Cardiac septum (tissue), 1 donor: ENCODE measurements at regions of chr6 and their contacts with region 1.

Region 1: DNA sequence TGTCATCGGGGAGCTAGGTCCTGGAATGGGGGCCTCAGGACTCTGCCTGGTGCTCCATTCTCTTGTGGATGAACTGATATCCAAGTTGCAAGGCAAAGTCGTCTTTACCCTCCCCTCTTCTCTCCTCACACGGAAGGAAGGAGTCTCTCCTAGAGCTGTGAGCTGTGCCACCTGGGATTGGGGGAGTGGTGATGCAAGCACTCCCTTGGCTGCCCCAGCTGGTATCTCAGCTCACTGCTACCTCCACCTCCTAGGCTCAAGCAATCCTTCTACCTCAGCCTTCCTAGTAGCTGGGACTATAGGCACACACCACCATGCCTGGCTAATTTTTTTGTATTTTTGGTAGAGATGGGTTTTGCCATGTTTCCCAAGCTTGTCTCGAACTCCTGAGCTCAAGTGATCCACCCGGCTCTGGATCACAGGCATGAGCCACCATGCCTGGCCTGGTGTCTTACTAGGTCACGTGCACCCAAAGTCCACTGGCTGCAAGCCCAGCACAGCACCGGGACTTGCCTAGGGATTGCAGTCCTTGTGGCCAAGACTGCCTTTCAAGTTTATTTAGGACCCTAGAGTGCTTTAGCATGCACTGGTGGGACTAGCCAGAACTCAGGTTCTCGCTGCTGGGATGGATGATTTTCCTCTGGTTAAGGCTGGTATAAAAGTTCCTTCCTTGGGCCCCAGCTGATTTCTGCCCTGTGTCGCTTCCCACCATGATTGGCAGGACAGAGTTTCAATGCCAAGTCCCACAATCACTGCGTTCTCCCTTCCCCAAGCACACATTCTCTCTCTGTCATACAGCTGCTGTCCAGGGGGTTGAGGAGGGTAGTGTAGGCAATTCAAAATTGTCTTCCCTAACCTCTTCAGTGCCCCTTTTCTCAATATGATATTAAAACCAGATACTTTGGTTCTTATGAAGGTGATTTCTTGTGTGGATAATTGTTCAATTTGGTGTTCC is 33.5 kb downstream of the SMAP1 start:
- DNase-seq: no peak

Region 2: DNA sequence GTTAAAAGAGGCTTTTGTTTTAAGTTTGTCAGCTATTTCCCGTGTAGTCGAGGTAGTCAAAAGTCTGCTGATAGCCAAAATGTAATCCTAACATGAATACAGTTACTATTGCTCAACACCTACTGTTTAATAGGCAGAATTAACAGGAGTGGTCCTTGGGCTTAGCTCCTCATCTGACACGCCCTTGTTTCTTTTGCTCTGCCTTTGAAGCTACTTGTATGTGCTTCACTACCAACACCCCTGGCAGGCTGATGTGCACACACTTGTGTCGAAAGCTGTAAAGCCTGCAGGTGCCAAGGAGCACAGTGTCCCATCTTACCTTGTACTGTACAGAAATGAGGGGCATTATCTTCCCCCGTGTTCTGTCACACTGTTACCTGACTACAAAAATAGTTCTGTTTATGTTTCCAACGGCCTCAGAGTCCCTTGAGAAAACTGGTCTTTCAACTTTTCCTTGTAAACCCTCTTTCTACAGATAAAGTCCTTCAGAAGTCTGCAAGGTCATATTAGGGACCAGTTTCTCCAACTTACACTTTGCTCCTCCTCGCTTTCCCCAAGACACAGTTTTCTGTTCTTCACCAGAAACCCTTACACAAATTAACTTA is 125.2 kb before region 1 on chr6:
- intact Hi-C with region 1: no loop called
- DNase-seq: no peak

Region 3: GRCh38 chr6:70586114-70586513 is 115.1 kb before region 1 on chr6:
- intact Hi-C with region 1: no loop called
- DNase-seq: no peak

Region 4: DNA sequence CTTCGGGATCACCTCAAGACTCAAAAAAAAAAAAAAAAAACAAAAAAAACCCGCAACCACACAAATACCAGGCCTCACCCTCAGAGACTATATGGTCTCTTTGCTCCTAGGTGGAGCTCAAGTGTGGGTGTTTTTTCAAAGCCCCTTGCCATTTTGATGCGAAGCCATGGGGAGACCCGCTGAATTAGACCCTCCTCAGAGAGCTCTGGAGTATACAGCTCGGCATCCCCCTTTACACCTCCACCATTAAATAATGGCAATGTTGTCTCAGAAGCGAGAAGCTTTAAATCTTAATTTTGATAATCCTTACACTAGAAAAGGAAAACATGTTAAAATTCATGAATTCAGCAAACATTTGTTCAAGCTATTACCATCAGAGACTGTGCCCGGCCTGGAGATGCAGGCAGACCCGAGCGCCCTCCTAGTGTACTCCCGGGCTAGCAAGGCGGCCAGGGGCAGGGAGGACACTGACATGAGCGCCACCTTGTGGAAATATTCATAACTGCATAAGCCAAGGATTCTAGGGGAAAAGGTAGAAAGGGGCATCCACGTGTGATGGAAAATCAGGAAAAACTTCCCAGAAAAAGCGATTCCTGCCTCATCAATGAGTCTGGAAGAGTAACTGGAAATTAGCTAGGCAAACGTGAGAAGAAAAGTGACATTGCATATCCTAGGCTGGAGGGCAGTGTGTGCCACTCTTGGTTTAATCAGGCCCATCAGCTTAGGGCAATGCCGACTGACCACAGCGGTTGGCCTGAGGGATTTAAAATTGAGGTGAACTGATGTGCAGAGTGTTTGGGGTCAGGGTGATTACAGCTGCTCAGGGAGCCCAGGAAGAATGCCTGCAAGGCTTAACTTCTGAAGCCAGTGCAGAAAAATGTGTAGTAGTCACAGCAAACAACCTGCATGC is 183.1 kb after region 1 on chr6:
- intact Hi-C with region 1: no loop called
- DNase-seq: no peak

Region 5: DNA sequence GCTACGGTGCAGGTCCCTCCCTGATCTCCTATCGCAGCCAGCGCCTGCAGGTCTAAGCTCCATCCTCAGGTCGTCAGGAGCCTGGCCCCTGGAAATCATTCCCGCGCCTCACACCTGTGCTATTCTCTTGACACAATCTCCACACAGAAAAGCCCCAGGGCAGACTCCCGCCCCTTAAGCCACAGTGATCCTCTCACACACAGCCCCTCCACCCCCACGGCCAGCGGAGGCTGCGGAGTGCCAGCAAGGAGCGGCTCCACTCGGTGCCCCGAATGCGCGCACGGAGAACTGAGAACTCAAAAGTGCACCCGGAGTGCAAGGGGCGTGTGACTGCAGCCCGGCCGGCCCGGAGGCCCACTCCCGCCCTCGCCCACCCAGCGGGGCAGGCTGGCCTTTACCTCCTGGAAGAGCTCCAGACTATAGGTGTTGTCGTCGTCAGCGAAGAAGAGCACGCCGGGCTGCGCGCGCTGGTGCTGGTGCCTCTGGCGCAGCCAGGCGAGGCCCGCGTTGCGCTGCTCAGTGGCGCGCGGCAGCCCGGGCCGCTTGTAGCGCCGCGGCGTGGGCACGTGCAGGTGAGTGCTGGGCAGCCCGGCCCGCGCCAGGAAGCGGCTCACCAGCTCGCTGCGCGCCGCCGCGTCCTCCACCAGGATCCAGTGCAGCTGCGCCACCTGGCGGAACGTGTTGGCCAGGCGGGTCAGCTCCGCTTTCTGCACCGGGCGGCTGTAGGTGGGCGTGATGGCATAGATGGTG is 254.4 kb after region 1 on chr6:
- intact Hi-C with region 1: loop called (anchors 5 kb)
- DNase-seq: peak; percentile 91